Gastrocnemius medialis (tissue), 4 donors: ENCODE measurements at regions of chr10 and their contacts with region 1.

Region 1: DNA sequence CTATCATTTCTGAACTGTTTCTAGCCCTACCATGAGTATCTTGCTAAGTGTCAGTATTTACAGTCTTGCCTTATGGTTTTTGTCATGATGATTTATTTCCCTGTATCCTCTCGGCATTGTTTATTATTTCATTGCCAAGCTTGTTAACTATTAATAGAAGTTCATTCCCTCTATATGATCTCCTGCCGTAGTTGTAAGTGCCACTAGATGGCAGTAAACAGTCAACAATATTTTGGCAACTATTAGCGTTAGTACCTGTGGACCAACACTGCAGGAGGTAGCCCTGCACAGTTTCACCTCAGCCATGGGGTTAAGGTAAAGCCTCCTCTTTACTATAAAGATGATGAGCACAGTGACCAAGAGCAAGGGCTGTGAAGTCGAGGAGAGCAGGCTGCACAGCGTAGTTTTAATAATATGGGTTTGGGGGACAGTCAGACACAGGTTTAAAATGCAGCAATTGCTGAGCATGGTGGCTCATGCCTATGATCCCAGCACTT is 26.1 kb upstream of the CCNJ start:
- DNase-seq: no peak
- ATAC-seq: peak; percentile 74 to 87
- H3K4me3 ChIP-seq: no peak overlapping the region
- H3K27ac ChIP-seq: no peak overlapping the region
- H3K4me1 ChIP-seq: no peaks in the 10 kb centered on the region
- H3K27me3 ChIP-seq: no peaks in the 10 kb centered on the region
- CTCF ChIP-seq: peak; percentile 42 to 81 (median 60)
- POLR2A ChIP-seq: no peak

Region 2: DNA sequence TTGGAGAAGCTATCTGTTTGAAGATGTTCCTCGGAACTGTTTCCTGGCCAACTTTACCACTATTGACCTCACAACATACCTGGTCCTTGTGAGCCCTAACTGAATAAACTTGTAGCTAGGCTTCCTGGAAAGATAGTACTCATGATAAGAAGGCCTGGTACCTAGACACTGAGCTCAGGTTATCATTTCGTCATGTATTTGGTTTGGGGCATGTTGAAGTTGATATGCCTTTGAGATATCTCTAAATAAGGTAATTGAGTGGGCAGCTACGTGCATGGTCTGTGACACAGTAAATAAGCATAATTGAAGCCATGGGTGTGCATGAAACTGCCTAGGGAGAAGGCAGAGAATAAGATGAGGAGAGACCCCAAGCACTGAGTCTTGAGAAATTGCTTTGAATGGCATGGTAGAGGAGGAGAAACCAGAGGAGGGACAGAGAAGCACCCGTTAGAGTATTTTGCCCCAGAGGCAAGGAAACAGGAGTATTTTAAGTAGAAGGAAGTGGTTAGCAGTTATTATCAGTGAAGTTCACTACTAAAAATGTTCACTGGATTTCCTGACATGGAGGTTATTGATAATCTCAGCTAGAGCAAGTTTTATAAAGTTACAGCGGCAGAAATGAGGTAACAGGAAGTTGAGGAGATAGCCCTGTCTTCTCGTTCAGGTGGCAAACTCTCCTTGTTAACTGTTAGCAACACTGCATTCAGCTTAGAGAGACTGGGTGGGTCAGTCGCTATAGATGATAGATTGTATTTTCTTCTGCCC is 53.8 kb before region 1 on chr10:
- in situ Hi-C with region 1: no loop called
- intact Hi-C with region 1: no loop called
- DNase-seq: no peak
- ATAC-seq: no peak
- H3K4me3 ChIP-seq: no peak overlapping the region
- H3K27ac ChIP-seq: no peak overlapping the region
- H3K4me1 ChIP-seq: no peaks in the 10 kb centered on the region
- H3K27me3 ChIP-seq: no peaks in the 10 kb centered on the region
- CTCF ChIP-seq: no peak
- POLR2A ChIP-seq: no peak

Region 3: GRCh38 chr10:96292971-96293920 is 276.0 kb after region 1 on chr10:
- in situ Hi-C with region 1: loop called in 1 of 4 experiments (anchors 10 kb)
- intact Hi-C with region 1: loop called (anchors 2 kb)
- DNase-seq: no peak
- ATAC-seq: peak; percentile 74 to 78
- H3K4me3 ChIP-seq: no peak overlapping the region
- H3K27ac ChIP-seq: no peak overlapping the region
- H3K4me1 ChIP-seq: peaks cover 3 to 4% of the 10 kb centered on the region in 2 donors
- H3K27me3 ChIP-seq: peaks cover 0 to 7% (median 3%) of the 10 kb centered on the region in 3 donors
- CTCF ChIP-seq: peak in 4 of 5 experiments; percentile 28 to 60 (median 42)
- POLR2A ChIP-seq: no peak